ENCODE measurements at regions of chr9 and their contacts with region 1.

Region 1: GRCh38 chr9:21465859-21466518 is 16.1 kb downstream of the IFNE start:
- DNase-seq: peak; percentile 43 to 57 (median 50)
- H3K4me3 ChIP-seq: no peak overlapping the region
- H3K4me3 Mint-ChIP-seq: no peak overlapping the region
- H3K27ac ChIP-seq: no peak overlapping the region
- H3K27ac Mint-ChIP-seq: no peak overlapping the region
- H3K4me1 ChIP-seq: no peaks in the 10 kb centered on the region
- H3K4me1 Mint-ChIP-seq: peaks cover 0 to 2% (median 0%) of the 10 kb centered on the region in 4 donors
- H3K27me3 ChIP-seq: no peaks in the 10 kb centered on the region
- H3K27me3 Mint-ChIP-seq: peaks cover 5 to 7% of the 10 kb centered on the region in 2 donors

Region 2: DNA sequence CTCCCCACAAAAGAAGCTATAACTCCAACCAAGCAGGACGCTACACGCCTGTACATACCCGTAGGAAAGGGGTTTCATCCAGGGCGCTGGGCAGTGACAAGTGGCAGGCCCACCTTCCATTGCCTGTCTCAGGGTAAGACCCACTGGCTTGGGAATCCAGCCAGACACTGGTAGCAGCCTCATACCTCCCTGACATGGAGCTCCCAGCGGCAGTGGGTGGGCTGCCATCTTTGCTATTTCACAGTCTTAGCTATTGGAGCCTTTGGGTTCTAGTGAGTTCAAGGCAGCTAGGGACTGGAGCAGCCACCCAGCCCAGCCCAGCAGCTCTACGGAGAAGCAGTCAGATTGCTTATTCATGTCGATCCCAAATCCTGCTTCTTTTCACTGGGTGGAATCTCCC is 255.7 kb before region 1 on chr9:
- CTCF ChIA-PET with region 1: no interaction called
- POLR2A ChIA-PET with region 1: no interaction called
- intact Hi-C with region 1: loop called (anchors 10 kb)
- DNase-seq: no peak
- H3K4me3 ChIP-seq: no peak overlapping the region
- H3K4me3 Mint-ChIP-seq: no peak overlapping the region
- H3K27ac ChIP-seq: no peak overlapping the region
- H3K27ac Mint-ChIP-seq: no peak overlapping the region
- H3K4me1 ChIP-seq: no peaks in the 10 kb centered on the region
- H3K4me1 Mint-ChIP-seq: peaks cover 0 to 2% (median under 1%) of the 10 kb centered on the region in 4 donors
- H3K27me3 ChIP-seq: no peaks in the 10 kb centered on the region
- H3K27me3 Mint-ChIP-seq: peaks cover 6 to 12% of the 10 kb centered on the region in 2 donors

Region 3: GRCh38 chr9:21434202-21435014 is 31.6 kb before region 1 on chr9:
- CTCF ChIA-PET with region 1: interaction called, 8 read pairs
- POLR2A ChIA-PET with region 1: no interaction called
- intact Hi-C with region 1: loop called (anchors 1 kb)
- DNase-seq: peak; percentile 31 to 55 (median 40)
- H3K4me3 ChIP-seq: no peak overlapping the region
- H3K4me3 Mint-ChIP-seq: no peak overlapping the region
- H3K27ac ChIP-seq: no peak overlapping the region
- H3K27ac Mint-ChIP-seq: no peak overlapping the region
- H3K4me1 ChIP-seq: no peaks in the 10 kb centered on the region
- H3K4me1 Mint-ChIP-seq: no peaks in the 10 kb centered on the region
- H3K27me3 ChIP-seq: no peaks in the 10 kb centered on the region
- H3K27me3 Mint-ChIP-seq: peaks cover 14 to 19% of the 10 kb centered on the region in 2 donors

Region 4: DNA sequence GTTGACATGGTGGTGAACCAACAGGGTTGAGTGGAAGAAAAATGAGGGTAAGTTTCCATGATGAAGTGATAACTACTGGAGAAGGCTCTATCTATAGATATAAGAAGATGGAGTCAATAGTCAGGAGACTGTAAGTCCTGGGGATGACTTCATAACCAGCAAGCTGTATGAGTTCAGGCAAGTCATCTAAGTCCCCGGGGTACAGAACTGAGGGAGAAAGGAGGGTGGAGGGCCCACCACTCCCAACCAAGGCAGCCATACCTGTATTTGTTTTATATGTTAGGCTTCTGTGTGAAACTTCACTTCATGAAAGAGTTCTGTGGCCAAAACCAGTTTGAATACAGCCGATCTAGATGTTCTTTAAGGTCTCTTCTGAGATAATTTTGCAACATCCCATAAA is 69.4 kb after region 1 on chr9:
- CTCF ChIA-PET with region 1: no interaction called
- POLR2A ChIA-PET with region 1: no interaction called
- intact Hi-C with region 1: no loop called
- DNase-seq: no peak
- H3K4me3 ChIP-seq: no peak overlapping the region
- H3K4me3 Mint-ChIP-seq: no peak overlapping the region
- H3K27ac ChIP-seq: no peak overlapping the region
- H3K27ac Mint-ChIP-seq: no peak overlapping the region
- H3K4me1 ChIP-seq: no peaks in the 10 kb centered on the region
- H3K4me1 Mint-ChIP-seq: peaks cover 0 to 2% (median 0%) of the 10 kb centered on the region in 4 donors
- H3K27me3 ChIP-seq: no peaks in the 10 kb centered on the region
- H3K27me3 Mint-ChIP-seq: peaks cover 0 to 2% of the 10 kb centered on the region in 2 donors

Measured in CD4-positive, alpha-beta memory T cell (primary cell).